Heart left ventricle (tissue), 16 donors: ENCODE measurements at regions of chr6 and their contacts with region 1.

Region 1: GRCh38 chr6:127120787-127121636 is 2.5 kb downstream of the RSPO3 start:
- DNase-seq: peak; percentile 58 to 77 (median 64)
- ATAC-seq: peak; percentile 77 to 86 (median 84)
- H3K4me3 ChIP-seq: peak overlapping the region in 11 of 12 donors; percentile 5 to 66 (median 54)
- H3K27ac ChIP-seq: no peak overlapping the region
- H3K4me1 ChIP-seq: peaks cover 0 to 35% (median 22%) of the 10 kb centered on the region in 12 donors
- H3K27me3 ChIP-seq: peaks cover 14 to 79% (median 33%) of the 10 kb centered on the region in 9 donors
- CTCF ChIP-seq: peak; percentile 39 to 74 (median 66)
- POLR2A ChIP-seq: no peak

Region 2: GRCh38 chr6:125995972-125996580 is 1124.9 kb before region 1 on chr6:
- intact Hi-C with region 1: loop called in 3 of 10 experiments (anchors 5 to 10 kb)
- DNase-seq: peak; percentile 39 to 72 (median 45)
- ATAC-seq: peak; percentile 70 to 87 (median 82)
- H3K4me3 ChIP-seq: no peak overlapping the region
- H3K27ac ChIP-seq: no peak overlapping the region
- H3K4me1 ChIP-seq: peaks cover 0 to 15% (median 3%) of the 10 kb centered on the region in 12 donors
- H3K27me3 ChIP-seq: no peaks in the 10 kb centered on the region
- CTCF ChIP-seq: peak; percentile 92 to 98 (median 96)
- POLR2A ChIP-seq: no peak

Region 3: DNA sequence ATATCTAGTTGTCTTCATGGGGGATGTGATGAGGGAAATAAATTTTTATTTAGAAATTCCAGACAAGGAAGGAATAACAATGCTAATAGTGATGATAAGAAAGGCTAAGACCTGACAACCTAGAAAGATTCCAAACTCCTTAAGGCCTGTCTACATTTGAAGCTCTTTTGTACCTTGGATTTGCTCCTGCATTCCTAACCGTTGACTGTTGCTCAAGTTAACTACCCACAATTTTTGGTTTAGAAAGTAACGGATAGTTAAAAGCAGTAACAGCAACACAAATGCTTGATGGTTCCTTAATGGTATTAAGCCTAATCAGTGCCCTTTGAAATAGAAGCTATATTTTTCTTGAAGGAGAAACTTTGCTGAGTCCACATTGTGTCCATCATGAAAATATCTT is 1081.7 kb before region 1 on chr6:
- intact Hi-C with region 1: loop called in 3 of 10 experiments (anchors 5 to 10 kb)
- DNase-seq: no peak
- ATAC-seq: no peak
- H3K4me3 ChIP-seq: no peak overlapping the region
- H3K27ac ChIP-seq: no peak overlapping the region
- H3K4me1 ChIP-seq: peaks cover 0 to 23% (median 0%) of the 10 kb centered on the region in 12 donors
- H3K27me3 ChIP-seq: no peaks in the 10 kb centered on the region
- CTCF ChIP-seq: no peak
- POLR2A ChIP-seq: no peak

Region 4: GRCh38 chr6:126804332-126805064 is 316.5 kb before region 1 on chr6:
- intact Hi-C with region 1: loop called in 9 of 10 experiments (anchors 2 to 10 kb)
- DNase-seq: peak in 1 of 5 donors; percentile 19
- ATAC-seq: peak in 3 of 4 donors; percentile 45 to 56 (median 52)
- H3K4me3 ChIP-seq: no peak overlapping the region
- H3K27ac ChIP-seq: no peak overlapping the region
- H3K4me1 ChIP-seq: no peaks in the 10 kb centered on the region
- H3K27me3 ChIP-seq: peaks cover 0 to 11% (median 0%) of the 10 kb centered on the region in 9 donors
- CTCF ChIP-seq: peak; percentile 59 to 80 (median 68)
- POLR2A ChIP-seq: no peak